AG04450 (cell line): ENCODE measurements at regions of chr9 and their contacts with region 1.

Region 1: GRCh38 chr9:75071530-75072124 is 16.3 kb downstream of the NMRK1 start:
- DNase-seq: no peak
- H3K4me3 ChIP-seq: no peak overlapping the region
- H3K27ac ChIP-seq: no peak overlapping the region
- H3K27me3 ChIP-seq: no peaks in the 10 kb centered on the region
- CTCF ChIP-seq: no peak

Region 2: DNA sequence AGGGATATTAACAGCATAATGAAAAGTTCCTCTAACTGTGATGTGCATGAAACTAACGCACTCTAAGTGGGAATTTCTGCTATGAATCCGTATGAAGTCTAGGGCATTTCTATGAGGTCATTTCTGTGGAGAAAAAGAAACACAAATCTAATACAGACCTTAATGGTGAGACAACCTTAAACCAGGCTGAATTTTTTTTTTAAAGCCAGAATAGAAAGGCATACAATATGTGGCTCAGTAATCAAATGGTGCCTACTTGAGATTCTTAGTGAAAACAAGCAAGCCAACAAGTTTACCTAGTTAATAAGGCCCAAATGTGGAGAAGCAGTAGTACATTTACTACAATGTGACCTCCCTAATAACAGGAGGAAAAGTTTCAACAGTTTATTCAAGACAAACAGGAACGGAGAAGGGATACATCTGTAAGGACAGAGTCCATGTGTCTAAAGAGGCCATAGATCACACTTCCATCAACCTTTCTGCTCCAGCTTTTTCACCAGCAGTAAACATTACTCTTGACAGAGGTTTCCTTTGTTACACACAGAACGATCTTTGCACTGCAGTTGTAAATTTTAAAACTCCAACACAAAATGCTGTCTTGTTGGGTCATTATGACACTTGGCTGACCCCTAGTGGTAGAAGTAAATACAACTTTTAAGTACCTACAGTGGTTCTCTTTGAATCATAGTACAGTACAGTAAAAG is 69.8 kb before region 1 on chr9:
- CTCF ChIA-PET with region 1: interaction called, 12 read pairs
- POLR2A ChIA-PET with region 1: no interaction called
- DNase-seq: peak; percentile 78
- H3K4me3 ChIP-seq: no peak overlapping the region
- H3K27ac ChIP-seq: no peak overlapping the region
- H3K27me3 ChIP-seq: no peaks in the 10 kb centered on the region
- CTCF ChIP-seq: peak; percentile 72

Region 3: DNA sequence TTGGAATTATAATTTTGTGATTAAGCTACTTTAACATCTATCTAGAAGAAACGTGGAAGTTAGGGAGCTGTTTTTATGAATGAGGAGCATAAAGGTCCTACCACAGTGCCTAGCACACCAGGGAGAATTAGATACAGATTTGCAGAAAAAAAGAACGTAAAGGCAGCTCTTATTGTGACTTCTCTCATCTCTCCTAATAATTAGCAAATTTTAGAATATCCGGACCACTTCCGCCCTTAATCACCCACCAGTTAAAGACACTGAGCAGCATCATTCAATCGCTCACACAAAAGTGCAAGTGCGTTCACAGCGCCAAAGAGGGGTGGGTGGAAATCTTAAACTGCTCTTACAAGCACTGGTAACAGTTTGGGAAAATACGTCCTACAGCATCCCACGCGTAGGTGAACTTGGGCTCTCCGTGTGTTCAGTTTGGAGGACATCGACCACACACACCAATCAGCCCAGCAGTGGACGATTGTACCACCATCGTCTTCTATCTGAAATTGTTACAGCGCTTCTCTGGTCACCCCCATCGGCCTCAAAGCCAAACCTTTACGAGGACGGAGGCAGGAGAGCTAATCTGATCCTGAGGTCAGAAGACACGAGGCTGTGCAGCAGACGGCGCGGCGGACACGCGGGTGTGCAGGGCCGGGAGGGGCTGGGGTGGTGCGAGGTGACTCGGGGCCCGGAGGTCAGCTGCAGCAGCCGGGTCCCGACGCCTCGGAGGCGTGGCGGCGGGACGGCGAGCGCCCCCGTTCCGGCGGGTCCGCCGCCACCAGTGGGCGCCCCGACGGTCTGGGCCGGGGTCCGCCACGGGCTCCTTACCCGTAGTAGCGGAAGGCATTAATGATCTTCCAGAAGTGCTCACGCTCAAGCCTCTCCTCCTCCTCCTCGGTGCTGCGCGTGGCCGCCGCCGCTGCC is 44.2 kb before region 1 on chr9:
- CTCF ChIA-PET with region 1: interaction called, 25 read pairs
- POLR2A ChIA-PET with region 1: no interaction called
- DNase-seq: no peak
- H3K4me3 ChIP-seq: peak overlapping the region; percentile 86
- H3K27ac ChIP-seq: peak overlapping the region; percentile 47
- H3K27me3 ChIP-seq: no peaks in the 10 kb centered on the region
- CTCF ChIP-seq: no peak

Region 4: GRCh38 chr9:75120686-75121085 is 49.1 kb after region 1 on chr9:
- CTCF ChIA-PET with region 1: no interaction called
- POLR2A ChIA-PET with region 1: no interaction called
- DNase-seq: no peak
- H3K4me3 ChIP-seq: no peak overlapping the region
- H3K27ac ChIP-seq: no peak overlapping the region
- H3K27me3 ChIP-seq: no peaks in the 10 kb centered on the region
- CTCF ChIP-seq: no peak

Region 5: GRCh38 chr9:75282047-75282446 is 210.4 kb after region 1 on chr9:
- CTCF ChIA-PET with region 1: no interaction called
- POLR2A ChIA-PET with region 1: no interaction called
- DNase-seq: no peak
- H3K4me3 ChIP-seq: no peak overlapping the region
- H3K27ac ChIP-seq: no peak overlapping the region
- H3K27me3 ChIP-seq: no peaks in the 10 kb centered on the region
- CTCF ChIP-seq: no peak